Sciatic nerve (tissue), 2 donors: ENCODE measurements at regions of chr4 and their contacts with region 1.

Region 1: GRCh38 chr4:37686373-37687193 is at the start of gene RELL1:
- DNase-seq: peak; percentile 100
- ATAC-seq: peak; percentile 98
- total RNA-seq, gene RELL1: 80.6 TPM

Region 2: DNA sequence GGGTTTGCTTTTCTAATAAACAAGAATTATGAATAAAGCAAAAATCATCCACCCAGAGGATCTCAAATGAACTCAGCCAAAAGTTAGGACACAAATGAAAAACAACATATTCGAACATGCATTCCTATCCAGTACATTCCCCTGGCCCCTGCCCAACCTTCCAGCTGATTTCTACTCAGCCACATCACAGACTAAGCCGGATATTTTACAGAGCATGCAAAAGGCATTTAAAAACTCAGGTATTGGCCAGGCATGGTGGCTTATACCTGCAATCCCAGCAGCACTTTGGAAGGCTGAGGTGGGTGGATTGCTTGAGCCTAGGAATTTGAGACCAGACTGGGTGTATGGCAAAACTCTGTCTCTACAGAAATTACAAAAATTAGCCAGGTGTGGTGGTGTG is 55.0 kb before region 1 on chr4:
- intact Hi-C with region 1: loop called (anchors 10 kb)
- DNase-seq: no peak
- ATAC-seq: no peak

Region 3: GRCh38 chr4:39169426-39170185 is 1483.0 kb after region 1 on chr4:
- intact Hi-C with region 1: no loop called
- DNase-seq: no peak
- ATAC-seq: no peak